ENCODE measurements at regions of chr1 and their contacts with region 1.

Region 1: GRCh38 chr1:202304375-202304774 is 37.4 kb downstream of the UBE2T start:
- DNase-seq: no peak
- H3K4me3 Mint-ChIP-seq: no peak overlapping the region
- H3K27ac Mint-ChIP-seq: no peak overlapping the region
- H3K4me1 Mint-ChIP-seq: peaks cover 4% of the 10 kb centered on the region
- H3K27me3 Mint-ChIP-seq: no peaks in the 10 kb centered on the region

Region 2: DNA sequence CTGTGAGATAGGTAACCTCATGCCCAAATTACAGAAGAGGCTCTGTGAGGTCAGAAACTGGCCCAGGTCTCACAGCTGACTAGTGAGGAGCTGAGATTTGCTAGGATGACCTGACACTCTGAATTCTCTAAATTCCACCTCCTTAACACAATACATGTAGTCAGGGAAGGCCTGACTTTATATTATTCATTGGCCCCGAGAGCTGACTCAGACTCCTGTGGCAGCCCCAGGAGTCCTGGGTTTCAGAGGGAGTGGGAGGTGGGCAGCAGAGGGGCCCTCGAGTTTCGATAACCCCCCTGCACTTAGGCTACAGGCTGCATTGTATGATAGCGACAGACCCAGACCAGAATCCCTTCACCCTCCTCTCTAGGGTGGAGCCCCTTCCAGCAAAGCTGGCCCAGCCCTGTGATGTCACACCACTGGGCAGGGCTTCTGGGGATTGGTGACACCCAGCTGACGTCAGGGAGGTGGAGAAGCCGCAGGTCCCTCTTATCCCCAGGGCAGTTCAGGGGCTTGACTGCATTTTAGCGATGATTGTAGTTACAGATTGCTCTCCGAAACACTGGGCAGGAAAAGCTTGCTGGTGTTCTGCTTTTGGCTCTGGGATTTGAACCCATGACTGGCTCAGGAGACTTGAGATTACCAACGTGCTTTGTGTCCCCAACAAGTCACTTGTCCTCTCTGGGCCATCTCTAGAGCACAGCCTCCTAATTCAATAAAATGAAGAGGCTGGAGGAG is 198.7 kb before region 1 on chr1:
- CTCF ChIA-PET with region 1: no interaction called
- POLR2A ChIA-PET with region 1: no interaction called
- DNase-seq: no peak
- H3K4me3 Mint-ChIP-seq: no peak overlapping the region
- H3K27ac Mint-ChIP-seq: no peak overlapping the region
- H3K4me1 Mint-ChIP-seq: no peaks in the 10 kb centered on the region
- H3K27me3 Mint-ChIP-seq: no peaks in the 10 kb centered on the region

Region 3: DNA sequence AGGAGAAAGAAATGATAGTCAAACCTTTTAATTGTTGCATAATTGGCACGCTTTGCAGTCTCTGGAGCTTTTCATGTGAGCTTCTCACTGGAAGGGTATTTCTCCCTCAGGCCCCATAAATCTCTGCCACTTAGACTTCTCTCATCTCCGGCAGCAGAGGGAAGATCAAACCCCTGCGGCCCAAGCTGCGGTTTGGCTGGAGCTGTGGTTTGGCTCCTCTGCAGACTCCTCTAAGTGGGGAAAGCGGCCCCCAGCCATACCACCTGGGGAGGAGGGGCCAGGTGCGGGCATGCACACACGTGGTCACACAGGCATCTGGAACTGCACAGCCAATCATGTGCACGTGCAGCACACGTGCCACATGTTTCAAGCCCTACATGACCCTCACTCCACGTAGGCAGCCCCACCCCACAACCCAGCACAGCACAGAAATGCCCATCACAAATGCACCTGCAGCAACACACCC is 21.0 kb before region 1 on chr1:
- CTCF ChIA-PET with region 1: interaction called, 12 read pairs
- POLR2A ChIA-PET with region 1: no interaction called
- DNase-seq: peak; percentile 24
- H3K4me3 Mint-ChIP-seq: no peak overlapping the region
- H3K27ac Mint-ChIP-seq: no peak overlapping the region
- H3K4me1 Mint-ChIP-seq: peaks cover 15% of the 10 kb centered on the region
- H3K27me3 Mint-ChIP-seq: peaks cover 14% of the 10 kb centered on the region

Region 4: GRCh38 chr1:202348509-202349205 is 44.3 kb after region 1 on chr1 and contains the start of gene PPP1R12B:
- CTCF ChIA-PET with region 1: no interaction called
- POLR2A ChIA-PET with region 1: no interaction called
- DNase-seq: peak; percentile 98
- H3K4me3 Mint-ChIP-seq: peak within 1 kb of the TSS; percentile 84
- H3K27ac Mint-ChIP-seq: peak within 1 kb of the TSS; percentile 84
- H3K4me1 Mint-ChIP-seq: peaks cover 31% of the 10 kb centered on the region
- H3K27me3 Mint-ChIP-seq: no peaks in the 10 kb centered on the region
- total RNA-seq, gene PPP1R12B: 20.2 to 25.0 TPM

Region 5: DNA sequence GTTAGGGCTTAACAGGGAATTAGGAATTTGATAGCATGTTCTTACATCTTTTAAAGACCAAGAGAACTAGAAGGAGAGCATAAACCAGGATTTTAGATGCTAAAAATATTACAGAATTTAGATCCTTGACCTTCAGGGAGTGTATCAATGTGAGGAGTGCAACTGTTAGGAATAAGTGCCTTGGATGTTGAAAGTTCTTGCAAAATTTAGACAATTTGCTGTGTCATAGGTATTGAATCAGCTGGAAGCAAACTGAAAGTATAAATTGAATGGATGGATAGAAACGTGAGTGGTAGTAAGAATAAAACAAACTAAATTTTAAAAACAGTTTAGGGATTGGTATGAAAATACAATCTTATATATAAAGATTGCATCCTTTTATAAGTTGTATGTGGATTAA is 71.9 kb after region 1 on chr1:
- CTCF ChIA-PET with region 1: no interaction called
- POLR2A ChIA-PET with region 1: no interaction called
- DNase-seq: no peak
- H3K4me3 Mint-ChIP-seq: no peak overlapping the region
- H3K27ac Mint-ChIP-seq: no peak overlapping the region
- H3K4me1 Mint-ChIP-seq: peaks cover 12% of the 10 kb centered on the region
- H3K27me3 Mint-ChIP-seq: no peaks in the 10 kb centered on the region

Region 6: DNA sequence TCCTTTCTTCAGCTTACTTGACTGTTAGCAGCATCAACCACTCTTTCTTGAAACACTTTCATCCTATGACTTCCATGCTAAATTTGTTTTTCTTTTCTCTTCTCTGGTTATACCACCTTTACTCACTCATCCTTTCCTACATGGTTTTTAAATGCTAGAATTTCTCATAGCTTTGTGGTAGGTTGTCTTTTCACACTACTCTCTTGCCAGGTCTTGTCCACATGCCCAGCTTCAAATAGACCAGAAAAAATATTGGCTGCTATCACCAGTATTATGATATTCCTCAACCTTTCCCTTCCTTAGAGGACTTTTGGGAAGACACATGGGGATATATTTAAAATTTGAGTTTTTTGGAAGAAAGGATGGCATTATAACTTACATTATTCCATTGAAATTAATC is 92.9 kb after region 1 on chr1:
- CTCF ChIA-PET with region 1: no interaction called
- POLR2A ChIA-PET with region 1: no interaction called
- DNase-seq: no peak
- H3K4me3 Mint-ChIP-seq: no peak overlapping the region
- H3K27ac Mint-ChIP-seq: no peak overlapping the region
- H3K4me1 Mint-ChIP-seq: no peaks in the 10 kb centered on the region
- H3K27me3 Mint-ChIP-seq: no peaks in the 10 kb centered on the region